ENCODE measurements at regions of chr4 and their contacts with region 1.

Region 1: DNA sequence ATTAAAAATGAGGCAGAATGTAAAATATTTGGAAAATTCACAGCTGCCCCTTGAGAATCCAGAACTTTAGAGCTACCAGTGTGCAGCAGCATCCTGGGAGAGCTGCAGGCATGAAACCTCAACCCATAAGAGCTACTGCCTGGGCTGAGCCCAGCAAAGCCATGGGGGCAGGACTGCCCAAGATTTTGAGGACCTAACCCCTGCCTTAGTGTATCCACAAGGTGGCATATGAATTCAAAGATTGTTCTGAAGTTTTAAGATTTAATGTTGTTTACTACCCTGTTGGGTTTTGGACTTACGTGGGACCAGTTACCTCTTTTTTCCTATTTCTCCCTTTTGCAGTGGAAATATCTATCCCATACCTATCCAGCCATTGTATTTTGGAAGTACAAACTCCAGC is 26.4 kb downstream of the CASP6 start:
- DNase-seq: no peak
- H3K4me3 Mint-ChIP-seq: no peak overlapping the region
- H3K27ac Mint-ChIP-seq: no peak overlapping the region
- H3K4me1 Mint-ChIP-seq: peaks cover 12% of the 10 kb centered on the region
- H3K27me3 Mint-ChIP-seq: no peaks in the 10 kb centered on the region

Region 2: DNA sequence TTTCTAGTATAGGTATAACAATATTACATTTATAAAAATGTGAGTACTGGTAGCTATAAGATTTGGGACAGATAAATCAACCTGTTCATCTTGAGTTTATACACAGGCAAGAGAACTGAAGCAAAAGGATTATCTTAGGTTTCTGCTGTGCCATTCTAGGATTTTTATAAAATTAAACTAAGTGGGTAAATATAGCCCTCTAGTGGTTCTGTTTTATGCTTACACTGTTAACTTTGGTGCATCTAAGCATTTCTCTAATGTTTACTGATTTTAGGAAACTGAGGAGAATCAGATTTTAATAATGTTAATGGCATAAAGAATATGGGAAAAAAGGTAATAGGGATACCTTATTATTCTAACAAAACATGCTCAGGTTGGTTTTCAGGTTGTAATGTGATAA is 149.8 kb after region 1 on chr4:
- intact Hi-C with region 1: loop called (anchors 1 kb)
- DNase-seq: no peak
- H3K4me3 Mint-ChIP-seq: no peak overlapping the region
- H3K27ac Mint-ChIP-seq: no peak overlapping the region
- H3K4me1 Mint-ChIP-seq: peaks cover 10% of the 10 kb centered on the region
- H3K27me3 Mint-ChIP-seq: no peaks in the 10 kb centered on the region

Measured in activated T-helper 1 cell treated with anti-CD3 and anti-CD28 coated beads, Interleukin-12 subunit alpha, Interleukin-12 subunit beta, Interleukin-2, Interleukin-4 antibody, amounts not matched to agents 30 ng/mL and 10 ng/mL and 1 ng/mL, durations not matched to agents 14 hours and 24 hours and 36 hours (primary cell).